Naive thymus-derived CD8-positive, alpha-beta T cell (primary cell): ENCODE measurements at regions of chr20 and their contacts with region 1.

Region 1: GRCh38 chr20:32674362-32674789 is 635 bp upstream of the C20orf203 start:
- DNase-seq: peak; percentile 45 to 79 (median 64)
- ATAC-seq: peak; percentile 60
- H3K4me3 Mint-ChIP-seq: no peak overlapping the region
- H3K27ac Mint-ChIP-seq: peak overlapping the region in 5 of 10 donors; percentile 5 to 80 (median 56)
- H3K4me1 Mint-ChIP-seq: peaks cover 13 to 45% (median 40%) of the 10 kb centered on the region in 4 donors
- H3K27me3 Mint-ChIP-seq: no peaks in the 10 kb centered on the region

Region 2: DNA sequence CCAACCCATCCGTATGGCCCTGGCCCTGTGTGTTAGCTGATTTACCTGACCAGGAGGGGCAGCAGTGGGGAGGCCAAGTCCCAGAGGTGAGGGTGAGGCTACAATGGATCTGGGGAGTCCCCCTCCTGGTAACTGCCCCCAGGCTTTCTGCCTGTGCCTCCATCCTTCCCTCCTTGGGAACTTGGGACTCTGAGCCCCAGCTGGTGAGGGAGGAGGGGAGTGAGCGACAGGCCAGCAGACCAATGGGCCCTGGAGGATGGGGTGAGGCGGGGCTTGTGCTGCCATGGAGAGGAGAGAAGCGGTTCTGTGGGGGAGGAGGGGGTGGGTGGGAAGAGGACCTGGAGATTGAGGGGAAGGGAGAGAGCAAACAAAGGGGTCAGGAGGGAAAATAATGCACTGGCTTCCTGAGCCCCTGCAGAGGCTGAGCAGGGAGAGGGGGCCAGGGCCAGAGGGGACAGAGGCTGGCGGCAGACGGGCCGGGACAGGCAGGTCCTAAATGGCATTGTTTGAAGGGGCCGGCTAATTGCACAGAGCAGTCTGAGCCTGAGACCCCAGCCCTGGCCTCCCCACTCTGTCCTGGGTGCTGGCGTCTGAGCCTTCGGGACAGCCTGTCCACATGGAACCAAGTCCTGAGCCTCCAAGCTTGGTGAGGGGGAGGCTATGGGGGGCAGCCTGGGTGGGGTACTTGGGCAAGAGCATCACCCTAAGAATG is 105.3 kb after region 1 on chr20:
- POLR2A ChIA-PET with region 1: interaction called, 11 read pairs
- DNase-seq: no peak
- ATAC-seq: no peak
- H3K4me3 Mint-ChIP-seq: no peak overlapping the region
- H3K27ac Mint-ChIP-seq: no peak overlapping the region
- H3K4me1 Mint-ChIP-seq: peaks cover 8 to 29% (median 16%) of the 10 kb centered on the region in 4 donors
- H3K27me3 Mint-ChIP-seq: no peaks in the 10 kb centered on the region